H1 (cell line): ENCODE measurements at regions of chr11 and their contacts with region 1.

Region 1: DNA sequence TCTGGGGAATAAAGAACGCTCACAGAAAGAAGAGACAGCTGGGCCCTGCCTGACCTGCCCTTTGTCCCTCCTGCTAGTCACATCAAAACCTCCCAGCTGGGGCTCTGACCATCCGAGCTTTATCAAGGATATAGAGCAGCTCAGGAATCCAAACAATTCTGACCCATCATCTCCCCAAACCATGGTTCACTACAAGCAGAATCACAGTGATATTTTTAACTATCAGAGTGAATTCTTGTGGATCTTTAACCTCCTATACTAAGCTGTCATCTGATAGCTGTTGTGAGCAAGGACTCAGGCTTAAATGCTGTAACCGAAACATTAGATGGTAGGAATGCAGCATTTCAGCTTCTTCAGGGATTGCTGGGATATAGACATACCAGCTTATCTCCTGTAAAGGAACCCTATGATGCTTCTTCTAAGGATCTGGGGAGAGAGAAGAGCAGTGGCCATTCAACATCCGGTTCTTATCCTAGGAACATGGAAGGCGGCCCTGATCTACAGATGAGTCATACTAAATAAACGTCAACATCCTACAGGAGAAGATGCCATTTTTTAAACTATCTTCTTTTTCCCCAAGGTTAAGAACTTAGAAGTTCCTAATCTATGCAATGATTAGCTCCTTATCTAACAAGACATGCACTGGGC is 84.7 kb upstream of the AKIP1 start:
- DNase-seq: no peak
- H3K4me3 ChIP-seq: no peak overlapping the region; a peak in 1 of 8 replicates
- H3K27ac ChIP-seq: no peak overlapping the region
- H3K4me1 ChIP-seq: peaks cover 0 to 19% (median 14%) of the 10 kb centered on the region in 4 experiments; a peak in 6 of 7 replicates
- H3K27me3 ChIP-seq: no peaks in the 10 kb centered on the region
- CTCF ChIP-seq: no peak
- EP300 ChIP-seq: no peak
- POLR2A ChIP-seq: no peak
- RAD21 ChIP-seq: no peak

Region 2: GRCh38 chr11:8652140-8652539 is 174.1 kb before region 1 on chr11:
- CTCF ChIA-PET with region 1: no interaction called
- POLR2A ChIA-PET with region 1: no interaction called
- DNase-seq: no peak
- H3K4me3 ChIP-seq: no peak overlapping the region
- H3K27ac ChIP-seq: no peak overlapping the region
- H3K4me1 ChIP-seq: no peaks in the 10 kb centered on the region
- H3K27me3 ChIP-seq: no peaks in the 10 kb centered on the region
- CTCF ChIP-seq: no peak
- EP300 ChIP-seq: no peak
- POLR2A ChIP-seq: no peak
- RAD21 ChIP-seq: no peak

Region 3: GRCh38 chr11:8794677-8795103 is 31.6 kb before region 1 on chr11:
- CTCF ChIA-PET with region 1: no interaction called
- POLR2A ChIA-PET with region 1: no interaction called
- DNase-seq: no peak
- H3K4me3 ChIP-seq: no peak overlapping the region
- H3K27ac ChIP-seq: no peak overlapping the region
- H3K4me1 ChIP-seq: peaks cover 0 to 4% (median 0%) of the 10 kb centered on the region in 4 experiments; a peak in 3 of 7 replicates
- H3K27me3 ChIP-seq: no peaks in the 10 kb centered on the region
- CTCF ChIP-seq: peak; percentile 50 to 66 (median 56)
- EP300 ChIP-seq: no peak
- POLR2A ChIP-seq: no peak
- RAD21 ChIP-seq: peak; percentile 39 to 58; a peak in 3 of 4 replicates

Region 4: GRCh38 chr11:8838248-8838647 is 12.0 kb after region 1 on chr11:
- CTCF ChIA-PET with region 1: interaction called, 12 read pairs
- POLR2A ChIA-PET with region 1: interaction called, 8 read pairs
- DNase-seq: no peak
- H3K4me3 ChIP-seq: no peak overlapping the region
- H3K27ac ChIP-seq: no peak overlapping the region
- H3K4me1 ChIP-seq: peaks cover 15 to 28% (median 21%) of the 10 kb centered on the region in 4 experiments
- H3K27me3 ChIP-seq: no peaks in the 10 kb centered on the region
- CTCF ChIP-seq: no peak
- EP300 ChIP-seq: no peak
- POLR2A ChIP-seq: no peak
- RAD21 ChIP-seq: no peak